Activated CD4-positive, alpha-beta T cell treated with anti-CD3 and anti-CD28 coated beads, Interleukin-2, amount 10 ng/mL, durations not matched to agents 24 days and 14 days (primary cell): ENCODE measurements at regions of chr1 and their contacts with region 1.

Region 1: GRCh38 chr1:43227143-43227764 is 42.5 kb upstream of the TMEM125 start:
- DNase-seq: peak; percentile 94
- H3K4me3 Mint-ChIP-seq: no peak overlapping the region
- H3K27ac Mint-ChIP-seq: no peak overlapping the region
- H3K4me1 Mint-ChIP-seq: no peaks in the 10 kb centered on the region
- H3K27me3 Mint-ChIP-seq: peaks cover 3% of the 10 kb centered on the region

Region 2: DNA sequence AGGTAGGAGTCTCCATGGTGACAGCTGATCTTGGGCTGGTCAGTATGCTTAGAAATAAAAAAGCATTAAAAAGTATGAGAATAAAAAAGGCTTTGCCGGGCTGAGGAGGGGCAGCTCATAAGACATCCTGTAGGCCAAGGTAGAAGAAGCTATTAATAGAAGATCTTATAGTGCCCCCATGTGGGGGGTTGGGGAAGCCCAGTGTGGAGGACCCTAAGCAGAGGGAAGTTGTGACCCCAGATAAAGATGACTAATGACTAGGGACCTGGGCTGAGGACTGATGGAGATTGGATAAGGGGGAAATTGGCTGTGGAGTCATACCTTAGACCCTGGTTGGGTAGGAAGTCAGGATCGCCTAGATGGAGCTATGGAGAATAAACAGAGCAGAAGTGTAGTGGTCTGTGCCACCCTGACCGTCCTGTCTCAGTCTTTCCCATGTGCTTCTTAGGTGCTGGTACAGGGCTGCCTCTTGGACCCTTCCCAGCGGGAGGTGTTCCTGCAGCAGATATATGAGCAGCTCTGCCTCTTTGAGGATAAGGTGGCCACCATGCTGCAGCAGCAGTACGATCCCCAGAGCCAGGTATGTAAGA is 187.5 kb after region 1 on chr1:
- intact Hi-C with region 1: loop called (anchors 1 kb)
- DNase-seq: peak; percentile 88
- H3K4me3 Mint-ChIP-seq: no peak overlapping the region
- H3K27ac Mint-ChIP-seq: no peak overlapping the region
- H3K4me1 Mint-ChIP-seq: no peaks in the 10 kb centered on the region
- H3K27me3 Mint-ChIP-seq: no peaks in the 10 kb centered on the region

Region 3: DNA sequence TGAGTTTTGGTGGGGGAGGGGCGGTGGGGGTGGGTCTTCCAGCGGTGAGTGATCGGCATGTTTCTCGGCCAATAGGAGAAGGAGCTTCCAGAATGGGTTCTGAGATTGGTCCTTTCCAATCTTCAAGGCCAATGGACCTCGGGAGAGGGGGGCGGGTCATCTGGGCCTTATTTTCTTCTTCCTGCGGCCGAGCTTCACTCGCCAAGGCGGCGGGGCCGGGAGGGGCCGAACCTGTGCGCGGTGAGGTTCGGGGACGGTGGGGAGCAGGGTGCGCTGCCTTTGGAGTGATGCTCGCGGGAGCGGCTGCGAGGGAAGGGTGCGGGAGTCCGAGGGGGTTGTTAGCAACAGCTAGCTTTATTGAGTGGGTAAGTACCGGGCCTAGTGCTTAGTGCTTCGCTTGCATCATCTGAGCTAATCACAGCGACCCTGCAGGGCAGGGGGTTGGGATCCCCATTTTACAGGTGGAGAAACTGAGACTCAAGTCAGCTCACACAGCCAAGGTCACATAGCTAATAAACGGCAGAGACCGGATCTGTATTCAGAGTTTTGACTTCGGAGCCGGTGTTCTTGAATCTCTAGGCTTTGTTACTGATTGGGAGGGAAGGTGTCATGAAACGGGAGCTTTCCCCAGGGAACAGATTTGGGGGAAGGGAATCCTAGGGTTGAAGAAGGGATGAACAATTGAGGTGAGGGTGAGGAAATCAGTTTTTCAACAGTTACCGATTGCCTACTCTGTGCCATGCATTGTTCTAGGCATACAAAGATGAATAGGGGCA is 423.2 kb after region 1 on chr1:
- intact Hi-C with region 1: loop called (anchors 5 kb)
- DNase-seq: peak; percentile 97
- H3K4me3 Mint-ChIP-seq: peak overlapping the region; percentile 91
- H3K27ac Mint-ChIP-seq: peak overlapping the region; percentile 98
- H3K4me1 Mint-ChIP-seq: peaks cover 25% of the 10 kb centered on the region
- H3K27me3 Mint-ChIP-seq: peaks cover 5% of the 10 kb centered on the region